Left cardiac atrium (tissue), 4 donors: ENCODE measurements at regions of chr1 and their contacts with region 1.

Region 1: DNA sequence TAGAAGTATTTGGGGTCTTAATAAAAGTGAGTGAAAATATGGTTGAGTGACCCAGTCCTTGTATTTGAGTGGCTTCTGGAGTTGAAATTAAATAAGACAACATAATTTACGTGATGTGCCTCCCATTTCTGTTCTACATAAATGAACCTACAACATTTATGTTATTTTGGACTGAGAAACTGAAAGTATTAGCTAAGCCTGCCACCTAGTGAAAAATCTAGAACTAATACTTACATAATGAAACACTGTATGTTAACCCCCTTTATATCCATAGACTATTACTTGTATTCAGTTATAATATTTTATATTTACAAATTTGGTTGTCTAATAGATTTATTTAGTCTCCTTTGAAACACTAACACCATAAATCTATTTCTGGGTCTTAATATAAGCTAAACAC is 298.9 kb downstream of the KCNT2 start:
- DNase-seq: no peak
- ATAC-seq: no peak

Region 2: GRCh38 chr1:195939844-195940243 is 369.5 kb before region 1 on chr1:
- intact Hi-C with region 1: loop called in 1 of 2 experiments (anchors 5 kb)
- DNase-seq: no peak
- ATAC-seq: no peak

Region 3: GRCh38 chr1:196043268-196043667 is 266.1 kb before region 1 on chr1:
- intact Hi-C with region 1: no loop called
- DNase-seq: no peak
- ATAC-seq: no peak

Region 4: GRCh38 chr1:196063293-196063692 is 246.1 kb before region 1 on chr1:
- intact Hi-C with region 1: no loop called
- DNase-seq: no peak
- ATAC-seq: no peak

Region 5: DNA sequence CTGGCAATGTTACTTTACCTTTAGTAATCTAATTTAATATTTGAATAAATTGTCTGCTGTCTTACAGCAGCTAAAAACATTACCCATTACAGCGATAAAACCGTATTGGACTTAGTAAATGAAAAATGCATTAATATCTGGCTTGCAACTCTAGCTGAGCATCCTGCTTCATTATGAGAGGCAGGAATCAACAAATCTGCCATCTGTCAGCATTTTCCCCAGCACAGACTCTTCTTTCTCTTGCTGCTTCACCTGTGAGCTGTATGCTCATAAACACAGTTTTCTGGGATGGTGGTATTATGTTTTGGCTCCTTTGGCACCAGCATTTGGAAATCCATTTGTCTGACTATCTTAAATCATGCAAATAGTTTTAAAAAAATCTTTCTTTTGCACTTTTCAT is 188.2 kb before region 1 on chr1:
- intact Hi-C with region 1: no loop called
- DNase-seq: no peak
- ATAC-seq: no peak

Region 6: DNA sequence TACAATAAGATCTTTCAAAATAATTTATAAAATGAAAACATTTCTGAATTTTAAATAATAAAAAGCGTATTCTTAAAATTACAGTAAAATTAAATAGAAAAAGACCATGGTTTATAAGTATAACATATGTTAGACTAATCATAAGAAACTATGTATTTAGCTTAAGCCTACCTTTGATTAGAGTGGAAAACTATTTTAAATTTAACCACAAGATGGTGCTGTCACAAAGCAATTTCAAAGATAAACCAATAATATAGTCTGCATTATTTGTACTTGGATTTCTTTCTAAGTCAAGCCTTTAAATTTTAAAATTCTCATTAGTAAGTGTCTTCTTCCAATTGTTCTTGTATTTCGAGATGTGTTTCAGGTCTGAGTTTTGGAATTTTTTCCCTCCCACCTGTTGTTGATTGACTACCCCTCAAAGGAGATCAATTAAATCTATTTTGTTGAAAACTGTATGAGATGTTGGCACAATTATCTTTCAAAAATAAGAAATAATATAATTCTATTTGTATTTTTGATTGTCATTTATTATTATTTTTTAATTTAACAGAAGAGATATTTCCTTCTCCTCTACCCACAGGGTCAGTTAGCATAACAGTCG is 160.9 kb before region 1 on chr1:
- intact Hi-C with region 1: loop called (anchors 5 kb)
- DNase-seq: no peak
- ATAC-seq: no peak

Region 7: DNA sequence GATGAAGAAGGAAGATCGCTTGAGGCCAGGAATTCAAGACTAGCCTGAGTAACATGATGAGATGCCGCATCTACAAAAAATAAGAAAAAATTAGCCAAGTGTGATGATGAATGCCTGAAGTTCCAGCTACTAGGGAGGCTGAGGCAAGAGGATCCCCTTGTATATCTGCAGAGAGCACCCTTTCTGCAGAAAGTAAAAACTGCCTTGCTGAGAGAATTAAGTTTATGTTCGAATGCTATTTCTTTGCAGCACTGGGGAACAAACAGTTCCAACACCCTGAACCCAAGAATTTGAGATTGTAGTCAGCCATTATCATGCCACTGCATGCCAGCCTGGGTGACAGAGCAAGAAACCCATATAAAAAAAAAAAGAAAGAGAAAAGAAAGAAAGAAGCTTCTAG is 319.5 kb after region 1 on chr1:
- intact Hi-C with region 1: no loop called
- DNase-seq: no peak
- ATAC-seq: no peak